IMR-90 (cell line): ENCODE measurements at regions of chr18 and their contacts with region 1.

Region 1: GRCh38 chr18:7168408-7168807 is 50.8 kb upstream of the LAMA1 start:
- DNase-seq: no peak
- ATAC-seq: no peak
- H3K4me3 ChIP-seq: no peak overlapping the region
- H3K27ac ChIP-seq: no peak overlapping the region
- H3K4me1 ChIP-seq: no peaks in the 10 kb centered on the region; the same call in 1 of the 2 replicates
- H3K27me3 ChIP-seq: no peaks in the 10 kb centered on the region
- CTCF ChIP-seq: no peak
- POLR2A ChIP-seq: no peak
- RAD21 ChIP-seq: no peak

Region 2: DNA sequence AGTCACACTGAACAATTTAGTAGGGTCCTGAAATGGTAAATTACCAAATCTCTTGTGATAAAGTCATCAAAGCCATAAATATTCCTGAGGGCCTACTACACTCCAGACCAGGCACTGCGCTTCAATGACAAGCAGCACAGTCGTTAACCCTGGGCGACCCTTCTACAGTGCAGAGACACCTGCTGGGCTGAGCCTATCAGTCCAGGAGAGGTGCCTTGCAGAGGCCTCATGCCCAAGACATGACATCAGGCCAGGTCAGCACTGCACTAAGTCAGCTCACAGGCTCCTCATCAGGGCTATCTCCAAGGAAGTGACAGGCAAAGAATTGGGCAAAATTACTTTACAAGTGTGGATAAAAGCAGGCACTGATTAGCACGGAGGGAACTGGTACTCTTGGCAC is 1458.2 kb before region 1 on chr18:
- CTCF ChIA-PET with region 1: no interaction called
- POLR2A ChIA-PET with region 1: interaction called, 16 read pairs
- dilution Hi-C with region 1: no loop called
- in situ Hi-C with region 1: no loop called
- intact Hi-C with region 1: no loop called
- DNase-seq: no peak
- ATAC-seq: no peak
- H3K4me3 ChIP-seq: no peak overlapping the region
- H3K27ac ChIP-seq: no peak overlapping the region
- H3K4me1 ChIP-seq: no peaks in the 10 kb centered on the region
- H3K27me3 ChIP-seq: no peaks in the 10 kb centered on the region
- CTCF ChIP-seq: no peak
- POLR2A ChIP-seq: no peak
- RAD21 ChIP-seq: no peak

Region 3: GRCh38 chr18:6807515-6808257 is 360.7 kb before region 1 on chr18:
- CTCF ChIA-PET with region 1: no interaction called
- POLR2A ChIA-PET with region 1: no interaction called
- dilution Hi-C with region 1: no loop called
- in situ Hi-C with region 1: no loop called
- intact Hi-C with region 1: no loop called
- DNase-seq: no peak
- ATAC-seq: peak; percentile 29
- H3K4me3 ChIP-seq: no peak overlapping the region
- H3K27ac ChIP-seq: no peak overlapping the region
- H3K4me1 ChIP-seq: peaks cover 3% of the 10 kb centered on the region; the same call in 1 of the 2 replicates
- H3K27me3 ChIP-seq: no peaks in the 10 kb centered on the region
- CTCF ChIP-seq: no peak
- POLR2A ChIP-seq: no peak
- RAD21 ChIP-seq: no peak

Region 4: GRCh38 chr18:7272311-7273049 is 104.1 kb after region 1 on chr18:
- CTCF ChIA-PET with region 1: no interaction called
- POLR2A ChIA-PET with region 1: no interaction called
- dilution Hi-C with region 1: no loop called
- in situ Hi-C with region 1: no loop called
- intact Hi-C with region 1: no loop called
- DNase-seq: peak; percentile 61
- ATAC-seq: peak; percentile 87
- H3K4me3 ChIP-seq: no peak overlapping the region
- H3K27ac ChIP-seq: no peak overlapping the region
- H3K4me1 ChIP-seq: peaks cover 4% of the 10 kb centered on the region; the same call in 1 of the 2 replicates
- H3K27me3 ChIP-seq: no peaks in the 10 kb centered on the region; the same call in 1 of the 2 replicates
- CTCF ChIP-seq: peak; percentile 57
- POLR2A ChIP-seq: no peak
- RAD21 ChIP-seq: peak; percentile 67

Region 5: GRCh38 chr18:7512348-7512747 is 343.9 kb after region 1 on chr18:
- CTCF ChIA-PET with region 1: no interaction called
- POLR2A ChIA-PET with region 1: no interaction called
- dilution Hi-C with region 1: no loop called
- in situ Hi-C with region 1: no loop called
- intact Hi-C with region 1: no loop called
- DNase-seq: no peak
- ATAC-seq: no peak
- H3K4me3 ChIP-seq: no peak overlapping the region
- H3K27ac ChIP-seq: no peak overlapping the region
- H3K4me1 ChIP-seq: no peaks in the 10 kb centered on the region
- H3K27me3 ChIP-seq: peaks cover 17% of the 10 kb centered on the region
- CTCF ChIP-seq: no peak
- POLR2A ChIP-seq: no peak
- RAD21 ChIP-seq: no peak